ENCODE measurements at regions of chr11 and their contacts with region 1.

Region 1: GRCh38 chr11:64688534-64688982 is 34.4 kb downstream of the NRXN2 start:
- DNase-seq: peak; percentile 92
- H3K4me3 Mint-ChIP-seq: peak overlapping the region; percentile 30
- H3K27ac Mint-ChIP-seq: no peak overlapping the region
- H3K4me1 Mint-ChIP-seq: peaks cover 8% of the 10 kb centered on the region
- H3K27me3 Mint-ChIP-seq: peaks cover 10% of the 10 kb centered on the region

Region 2: DNA sequence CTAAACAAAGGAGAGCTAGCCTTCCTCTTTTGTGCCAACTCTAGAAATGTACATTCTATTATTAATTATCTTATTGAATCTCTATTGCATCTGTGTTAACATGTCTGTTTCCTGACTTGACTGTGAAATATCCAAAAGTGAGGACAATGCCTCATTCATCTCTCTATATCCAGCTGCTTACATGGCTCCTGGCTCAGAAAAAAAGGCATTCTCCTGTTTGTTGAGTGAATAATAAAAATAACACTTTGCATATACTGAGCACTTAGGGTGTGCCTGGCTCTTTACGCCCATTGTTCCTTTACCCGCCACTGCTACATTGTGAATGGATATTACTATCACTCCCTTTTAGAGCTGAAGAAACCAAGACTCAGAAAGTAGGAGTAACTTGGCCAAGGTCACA is 14.5 kb after region 1 on chr11:
- CTCF ChIA-PET with region 1: interaction called, 26 read pairs
- POLR2A ChIA-PET with region 1: interaction called, 3 read pairs
- intact Hi-C with region 1: no loop called
- DNase-seq: no peak
- H3K4me3 Mint-ChIP-seq: no peak overlapping the region
- H3K27ac Mint-ChIP-seq: no peak overlapping the region
- H3K4me1 Mint-ChIP-seq: no peaks in the 10 kb centered on the region
- H3K27me3 Mint-ChIP-seq: peaks cover 9% of the 10 kb centered on the region

Region 3: GRCh38 chr11:64718084-64718779 is 29.7 kb after region 1 on chr11:
- CTCF ChIA-PET with region 1: interaction called, 10 read pairs
- POLR2A ChIA-PET with region 1: no interaction called
- intact Hi-C with region 1: loop called (anchors 1 kb)
- DNase-seq: no peak
- H3K4me3 Mint-ChIP-seq: no peak overlapping the region
- H3K27ac Mint-ChIP-seq: no peak overlapping the region
- H3K4me1 Mint-ChIP-seq: no peaks in the 10 kb centered on the region
- H3K27me3 Mint-ChIP-seq: peaks cover 50% of the 10 kb centered on the region

Region 4: GRCh38 chr11:64723117-64723906 is 34.8 kb after region 1 on chr11 and contains the start of gene NRXN2:
- CTCF ChIA-PET with region 1: interaction called, 10 read pairs
- POLR2A ChIA-PET with region 1: no interaction called
- intact Hi-C with region 1: loop called (anchors 1 kb)
- DNase-seq: peak; percentile 91
- H3K4me3 Mint-ChIP-seq: peak within 1 kb of the TSS; percentile 59
- H3K27ac Mint-ChIP-seq: peak within 1 kb of the TSS; percentile 28
- H3K4me1 Mint-ChIP-seq: peaks cover 6% of the 10 kb centered on the region
- H3K27me3 Mint-ChIP-seq: peaks cover 15% of the 10 kb centered on the region
- total RNA-seq, gene NRXN2: 0.31 to 0.41 TPM

Region 5: GRCh38 chr11:64734811-64735724 is 46.5 kb after region 1 on chr11:
- CTCF ChIA-PET with region 1: interaction called, 45 read pairs
- POLR2A ChIA-PET with region 1: interaction called, 6 read pairs
- intact Hi-C with region 1: no loop called
- DNase-seq: no peak
- H3K4me3 Mint-ChIP-seq: no peak overlapping the region
- H3K27ac Mint-ChIP-seq: no peak overlapping the region
- H3K4me1 Mint-ChIP-seq: peaks cover 2% of the 10 kb centered on the region
- H3K27me3 Mint-ChIP-seq: no peaks in the 10 kb centered on the region

Region 6: GRCh38 chr11:64742889-64743590 is 54.5 kb after region 1 on chr11:
- CTCF ChIA-PET with region 1: interaction called, 45 read pairs
- POLR2A ChIA-PET with region 1: interaction called, 6 read pairs
- intact Hi-C with region 1: loop called (anchors 1 kb)
- DNase-seq: peak; percentile 84
- H3K4me3 Mint-ChIP-seq: peak overlapping the region; percentile 37
- H3K27ac Mint-ChIP-seq: no peak overlapping the region
- H3K4me1 Mint-ChIP-seq: peaks cover 25% of the 10 kb centered on the region
- H3K27me3 Mint-ChIP-seq: peaks cover 8% of the 10 kb centered on the region

Region 7: DNA sequence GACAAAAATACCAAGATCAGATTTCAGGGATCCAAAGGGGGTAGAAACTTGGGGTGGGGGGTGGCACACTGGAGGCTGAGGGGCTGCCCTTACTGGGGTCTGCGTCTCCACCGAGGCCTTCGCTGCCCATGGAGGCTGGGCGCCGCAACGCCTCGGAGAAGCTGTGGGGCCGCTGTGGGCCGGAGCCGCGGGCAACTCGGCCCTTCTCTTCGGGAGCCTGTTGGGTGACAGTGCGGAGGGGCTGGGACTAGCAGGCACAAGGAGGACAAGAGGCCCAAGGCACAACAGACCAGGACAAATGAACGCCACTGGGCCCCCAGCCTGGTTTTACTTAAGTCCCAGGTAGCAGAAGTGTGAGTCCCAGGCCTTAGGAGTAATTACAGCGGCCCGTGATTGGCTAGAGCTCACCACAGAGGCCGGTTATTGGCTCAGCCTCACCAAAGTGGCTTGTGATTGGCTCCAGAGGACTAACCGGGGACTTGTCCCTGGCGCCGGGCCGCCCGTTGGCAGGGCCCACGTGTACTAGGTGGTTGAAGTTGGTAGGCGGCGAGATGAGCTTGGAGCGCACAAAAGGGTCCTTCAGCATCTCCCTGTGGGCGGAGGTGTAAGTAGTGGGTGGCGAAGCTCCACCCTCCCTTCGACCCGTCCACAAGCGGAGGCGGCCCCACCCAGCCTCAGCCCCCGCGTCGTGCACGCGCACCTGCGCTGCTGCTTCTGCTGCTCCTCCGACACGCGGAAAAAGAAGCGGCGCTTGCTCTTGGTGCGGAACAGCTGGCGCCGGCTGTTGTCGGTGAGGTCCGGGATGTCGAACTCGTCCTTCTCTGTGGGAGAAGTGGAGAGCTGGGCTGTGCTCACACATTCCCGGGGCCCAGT is 138.3 kb after region 1 on chr11:
- CTCF ChIA-PET with region 1: no interaction called
- POLR2A ChIA-PET with region 1: no interaction called
- intact Hi-C with region 1: no loop called
- DNase-seq: no peak
- H3K4me3 Mint-ChIP-seq: no peak overlapping the region
- H3K27ac Mint-ChIP-seq: no peak overlapping the region
- H3K4me1 Mint-ChIP-seq: no peaks in the 10 kb centered on the region
- H3K27me3 Mint-ChIP-seq: no peaks in the 10 kb centered on the region